AG04449 (cell line): ENCODE measurements at regions of chr9 and their contacts with region 1.

Region 1: GRCh38 chr9:4382722-4383317 is 83.0 kb upstream of the GLIS3 start:
- DNase-seq: no peak
- H3K4me3 ChIP-seq: no peak overlapping the region
- CTCF ChIP-seq: peak; percentile 29

Region 2: GRCh38 chr9:2857564-2858198 is 1525.1 kb before region 1 on chr9:
- CTCF ChIA-PET with region 1: interaction called, 20 read pairs
- POLR2A ChIA-PET with region 1: no interaction called
- DNase-seq: no peak
- H3K4me3 ChIP-seq: no peak overlapping the region
- CTCF ChIP-seq: peak; percentile 80

Region 3: GRCh38 chr9:4548811-4549725 is 166.2 kb after region 1 on chr9:
- CTCF ChIA-PET with region 1: interaction called, 11 read pairs
- POLR2A ChIA-PET with region 1: no interaction called
- DNase-seq: no peak
- H3K4me3 ChIP-seq: no peak overlapping the region
- CTCF ChIP-seq: peak; percentile 24

Region 4: DNA sequence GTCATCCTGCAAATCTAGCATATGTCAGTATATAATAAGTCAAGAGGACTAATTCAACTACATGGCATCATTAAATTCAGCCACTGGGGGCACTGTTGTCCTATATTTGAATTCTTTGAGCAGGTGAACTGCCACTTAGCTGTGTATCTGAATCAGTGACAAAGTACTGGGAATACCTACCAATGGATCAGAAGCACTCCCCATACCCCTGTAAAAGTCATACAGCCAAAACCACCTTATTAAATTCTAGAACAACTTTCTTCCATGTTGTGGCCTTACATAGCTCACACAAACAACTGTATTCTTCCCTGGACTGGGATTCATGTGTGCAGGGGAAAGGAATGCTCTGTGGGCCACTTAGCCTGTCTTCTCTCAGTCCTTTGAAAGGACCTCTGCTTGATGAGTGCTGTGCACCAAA is 221.9 kb after region 1 on chr9:
- CTCF ChIA-PET with region 1: interaction called, 12 read pairs
- POLR2A ChIA-PET with region 1: no interaction called
- DNase-seq: no peak
- H3K4me3 ChIP-seq: no peak overlapping the region
- CTCF ChIP-seq: peak; percentile 48

Region 5: DNA sequence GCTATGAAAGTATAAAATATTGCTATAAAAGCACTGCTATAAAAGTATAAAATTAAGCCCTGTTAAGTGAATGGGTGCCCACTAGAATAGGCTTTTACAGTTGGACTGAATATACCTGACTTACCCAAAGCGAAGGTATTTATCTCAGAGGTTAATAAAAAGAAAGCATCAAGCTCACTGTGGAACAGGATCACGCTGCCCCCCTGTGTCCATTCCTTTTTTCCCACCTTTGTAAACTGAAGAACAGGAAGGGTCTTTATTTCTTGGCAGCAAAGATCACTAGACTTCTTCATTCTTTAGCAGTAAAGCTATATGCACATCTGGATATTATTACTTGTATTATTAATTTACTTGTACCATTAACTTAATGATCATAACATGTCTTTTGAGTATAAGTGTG is 257.2 kb after region 1 on chr9:
- CTCF ChIA-PET with region 1: interaction called, 91 read pairs
- POLR2A ChIA-PET with region 1: no interaction called
- DNase-seq: no peak
- H3K4me3 ChIP-seq: no peak overlapping the region
- CTCF ChIP-seq: peak; percentile 53

Region 6: GRCh38 chr9:4740638-4741364 is 358.0 kb after region 1 on chr9 and contains the start of gene AK3:
- CTCF ChIA-PET with region 1: interaction called, 11 read pairs
- POLR2A ChIA-PET with region 1: no interaction called
- DNase-seq: peak; percentile 17
- H3K4me3 ChIP-seq: peak within 1 kb of the TSS; percentile 82
- CTCF ChIP-seq: peak; percentile 57